ENCODE measurements at regions of chr12 and their contacts with region 1.

Region 1: GRCh38 chr12:2944401-2945047 is 14.7 kb upstream of the TEAD4 start:
- DNase-seq: peak; percentile 31
- H3K4me3 Mint-ChIP-seq: no peak overlapping the region
- H3K27ac Mint-ChIP-seq: no peak overlapping the region
- H3K4me1 Mint-ChIP-seq: no peaks in the 10 kb centered on the region
- H3K27me3 Mint-ChIP-seq: peaks cover 2% of the 10 kb centered on the region

Region 2: DNA sequence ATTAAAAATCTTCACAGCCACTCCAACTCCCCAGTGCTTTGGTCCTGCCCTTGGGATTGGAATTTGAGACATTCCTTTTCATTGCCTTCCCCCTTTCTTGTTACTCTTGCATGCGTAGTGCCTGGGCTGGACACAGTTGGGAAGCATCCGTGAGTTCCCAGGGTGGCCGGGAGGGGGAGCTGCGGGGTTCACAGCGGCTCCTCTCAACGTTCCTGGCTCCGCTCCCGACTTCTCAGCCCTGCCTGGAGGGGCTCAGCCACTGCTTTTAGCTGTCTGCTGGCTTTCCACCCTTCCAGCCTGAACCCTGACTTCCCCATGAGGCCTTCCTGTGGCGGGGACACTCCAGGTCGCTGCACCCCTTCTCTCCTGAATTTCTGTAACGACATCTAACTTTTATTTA is 90.9 kb before region 1 on chr12:
- intact Hi-C with region 1: loop called (anchors 1 kb)
- DNase-seq: no peak
- H3K4me3 Mint-ChIP-seq: no peak overlapping the region
- H3K27ac Mint-ChIP-seq: no peak overlapping the region
- H3K4me1 Mint-ChIP-seq: peaks cover 1% of the 10 kb centered on the region
- H3K27me3 Mint-ChIP-seq: no peaks in the 10 kb centered on the region

Region 3: DNA sequence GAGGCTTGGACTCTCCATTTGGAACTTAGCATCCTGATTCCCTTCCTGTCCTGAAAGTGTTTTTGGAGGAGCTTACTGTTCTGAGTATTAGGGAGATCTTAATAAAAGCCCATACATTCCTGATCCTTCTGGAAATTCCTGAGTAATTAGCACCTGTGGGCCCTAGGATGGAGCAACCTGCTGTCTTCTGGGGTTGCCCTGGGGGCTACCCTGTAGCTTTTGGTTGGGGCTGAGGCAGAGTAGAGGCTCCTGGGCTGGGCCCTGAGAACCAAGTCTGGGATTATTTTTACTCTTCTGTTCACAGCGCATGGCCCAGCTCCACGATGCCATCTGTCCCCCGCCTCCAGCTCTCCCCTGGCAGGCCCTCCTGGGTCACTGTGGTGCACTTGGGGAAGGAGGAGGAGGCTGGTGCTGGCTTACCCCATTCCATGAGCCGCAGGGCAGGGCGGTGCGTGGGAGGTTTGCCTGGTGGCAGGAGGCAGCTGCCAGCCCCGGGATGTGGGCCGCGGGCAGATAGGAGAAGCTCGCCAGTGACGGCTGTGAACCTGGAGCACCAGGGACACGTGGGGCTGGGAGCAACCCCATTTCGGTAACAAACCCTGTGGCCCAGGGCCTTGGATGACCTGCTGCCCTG is 37.7 kb after region 1 on chr12:
- intact Hi-C with region 1: no loop called
- DNase-seq: no peak
- H3K4me3 Mint-ChIP-seq: no peak overlapping the region
- H3K27ac Mint-ChIP-seq: no peak overlapping the region
- H3K4me1 Mint-ChIP-seq: no peaks in the 10 kb centered on the region
- H3K27me3 Mint-ChIP-seq: no peaks in the 10 kb centered on the region